Prostate gland (tissue), 2 donors: ENCODE measurements at regions of chr1 and their contacts with region 1.

Region 1: GRCh38 chr1:89631816-89632656 is 884 bp upstream of the LRRC8C start:
- DNase-seq: no peak
- H3K4me3 ChIP-seq: peak overlapping the region; percentile 64 to 69
- H3K27ac ChIP-seq: peak overlapping the region; percentile 69 to 74
- H3K4me1 ChIP-seq: no peaks in the 10 kb centered on the region
- H3K27me3 ChIP-seq: no peaks in the 10 kb centered on the region
- CTCF ChIP-seq: no peak
- POLR2A ChIP-seq: no peak

Region 2: GRCh38 chr1:89762779-89763648 is 131.0 kb after region 1 on chr1:
- intact Hi-C with region 1: loop called (anchors 2 kb)
- DNase-seq: peak; percentile 74
- H3K4me3 ChIP-seq: peak overlapping the region; percentile 22 to 25
- H3K27ac ChIP-seq: peak overlapping the region in 1 of 2 donors; percentile 7
- H3K4me1 ChIP-seq: no peaks in the 10 kb centered on the region
- H3K27me3 ChIP-seq: no peaks in the 10 kb centered on the region
- CTCF ChIP-seq: peak; percentile 68 to 95 (median 84)
- POLR2A ChIP-seq: no peak